Posterior cingulate gyrus (tissue), 11 donors: ENCODE measurements at regions of chr1 and their contacts with region 1.

Region 1: DNA sequence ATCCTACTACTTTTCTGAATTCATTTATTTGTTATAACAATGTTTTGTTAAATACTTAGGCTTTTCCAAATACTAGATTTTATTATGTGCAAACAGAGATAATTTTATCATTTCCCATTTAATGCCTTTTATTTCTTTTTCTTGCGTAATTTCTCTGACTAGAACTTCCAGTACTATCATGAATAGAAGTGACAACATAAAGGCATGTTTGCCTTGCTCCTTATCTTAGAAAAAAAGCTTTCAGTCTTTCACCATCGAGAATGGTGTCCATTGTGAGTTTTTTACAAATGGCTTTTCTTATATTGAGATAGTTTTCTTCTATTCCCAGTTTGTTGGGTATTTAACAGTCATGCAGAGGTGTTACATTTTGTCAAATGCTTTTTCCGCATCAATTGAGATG is 453.1 kb upstream of the ZP4 start:
- DNase-seq: no peak

Region 2: GRCh38 chr1:238364214-238364892 is 20.5 kb after region 1 on chr1:
- intact Hi-C with region 1: loop called (anchors 1 kb)
- DNase-seq: no peak